ENCODE measurements at regions of chr10 and their contacts with region 1.

Region 1: GRCh38 chr10:6269953-6270867 is 67.5 kb downstream of the PFKFB3 start:
- DNase-seq: no peak
- H3K4me3 ChIP-seq: no peak overlapping the region
- H3K27ac ChIP-seq: no peak overlapping the region
- H3K4me1 ChIP-seq: peaks cover 6% of the 10 kb centered on the region
- H3K27me3 ChIP-seq: no peaks in the 10 kb centered on the region
- CTCF ChIP-seq: no peak
- POLR2A ChIP-seq: no peak

Region 2: GRCh38 chr10:5977471-5978229 is 292.6 kb before region 1 on chr10 and contains the start of gene IL15RA:
- CTCF ChIA-PET with region 1: no interaction called
- POLR2A ChIA-PET with region 1: no interaction called
- dilution Hi-C with region 1: no loop called
- intact Hi-C with region 1: no loop called
- DNase-seq: peak; percentile 82
- H3K4me3 ChIP-seq: peak within 1 kb of the TSS; percentile 10 to 98 (median 47)
- H3K27ac ChIP-seq: peak within 1 kb of the TSS; percentile 60
- H3K4me1 ChIP-seq: peaks cover 14% of the 10 kb centered on the region
- H3K27me3 ChIP-seq: peaks cover 0 to 2% of the 10 kb centered on the region in 2 experiments
- CTCF ChIP-seq: peak; percentile 6 to 13
- POLR2A ChIP-seq: no peak
- total RNA-seq, gene IL15RA: 16.1 and 18.8 TPM in 2 replicates

Region 3: GRCh38 chr10:6249698-6250097 is 20.5 kb before region 1 on chr10:
- CTCF ChIA-PET with region 1: interaction called, 4 read pairs
- POLR2A ChIA-PET with region 1: no interaction called
- dilution Hi-C with region 1: no loop called
- intact Hi-C with region 1: loop called (anchors 2 kb)
- DNase-seq: no peak
- H3K4me3 ChIP-seq: no peak overlapping the region
- H3K27ac ChIP-seq: no peak overlapping the region
- H3K4me1 ChIP-seq: no peaks in the 10 kb centered on the region
- H3K27me3 ChIP-seq: no peaks in the 10 kb centered on the region
- CTCF ChIP-seq: no peak
- POLR2A ChIP-seq: no peak

Region 4: GRCh38 chr10:6593241-6593671 is 323.0 kb after region 1 on chr10:
- CTCF ChIA-PET with region 1: no interaction called
- POLR2A ChIA-PET with region 1: no interaction called
- dilution Hi-C with region 1: no loop called
- intact Hi-C with region 1: no loop called
- DNase-seq: no peak
- H3K4me3 ChIP-seq: no peak overlapping the region
- H3K27ac ChIP-seq: no peak overlapping the region
- H3K4me1 ChIP-seq: no peaks in the 10 kb centered on the region
- H3K27me3 ChIP-seq: no peaks in the 10 kb centered on the region
- CTCF ChIP-seq: no peak
- POLR2A ChIP-seq: no peak